Kidney (tissue), 22 donors: ENCODE measurements at regions of chr16 and their contacts with region 1.

Region 1: GRCh38 chr16:24810951-24811843 is 34.6 kb upstream of the SLC5A11 start:
- DNase-seq: peak in 1 of 5 donors; percentile 8
- H3K4me3 ChIP-seq: no peak overlapping the region
- H3K27ac ChIP-seq: no peak overlapping the region
- H3K4me1 ChIP-seq: peaks cover 0 to 5% (median 5%) of the 10 kb centered on the region in 3 donors
- H3K27me3 ChIP-seq: no peaks in the 10 kb centered on the region
- CTCF ChIP-seq: no peak

Region 2: DNA sequence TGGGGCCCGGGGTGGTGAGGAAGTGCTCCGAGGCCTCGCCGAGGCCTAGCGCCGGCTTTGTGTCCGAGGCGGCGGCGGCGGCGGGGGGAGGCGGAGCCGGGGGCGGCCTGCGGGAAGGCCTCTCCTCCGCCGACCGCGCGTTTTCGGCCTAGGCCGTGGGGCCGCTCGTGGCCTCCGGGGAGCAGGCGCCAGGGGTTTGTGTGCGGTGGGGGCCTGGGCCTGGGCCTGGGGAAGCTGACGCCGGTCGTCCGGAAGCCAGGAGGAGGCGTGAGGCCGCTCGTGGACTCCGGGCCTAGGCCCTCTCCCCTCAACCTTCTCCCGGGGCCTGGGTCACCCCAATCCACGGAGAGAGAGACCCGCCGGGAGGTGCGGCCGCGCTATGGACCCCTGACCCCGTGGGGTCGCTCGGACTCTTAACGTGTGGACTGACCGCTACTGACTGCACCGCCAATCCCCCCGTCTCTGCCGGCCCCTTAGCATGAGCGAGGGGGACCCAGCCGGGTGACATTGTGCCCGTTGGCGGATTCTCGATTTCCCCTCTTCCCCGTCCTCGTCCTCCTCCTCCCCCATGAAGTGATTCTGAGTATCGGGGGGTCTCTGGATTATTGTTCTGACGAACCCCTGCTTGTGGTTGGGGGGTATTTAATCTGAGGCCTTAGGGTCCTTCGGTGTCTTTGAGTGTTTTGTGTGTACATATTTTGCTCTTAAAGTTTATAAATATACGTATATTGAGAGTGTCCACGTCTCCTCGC is 271.2 kb before region 1 on chr16:
- intact Hi-C with region 1: loop called (anchors 10 kb)
- DNase-seq: peak in 4 of 5 donors; percentile 41 to 90 (median 73)
- H3K4me3 ChIP-seq: peak overlapping the region; percentile 86 to 96 (median 88)
- H3K27ac ChIP-seq: peak overlapping the region; percentile 94 to 100
- H3K4me1 ChIP-seq: peaks cover 0 to 12% (median 7%) of the 10 kb centered on the region in 3 donors
- H3K27me3 ChIP-seq: no peaks in the 10 kb centered on the region
- CTCF ChIP-seq: no peak

Region 3: GRCh38 chr16:24748242-24748641 is 63.0 kb before region 1 on chr16:
- intact Hi-C with region 1: no loop called
- DNase-seq: no peak
- H3K4me3 ChIP-seq: no peak overlapping the region
- H3K27ac ChIP-seq: no peak overlapping the region
- H3K4me1 ChIP-seq: peaks cover 0 to 27% (median 17%) of the 10 kb centered on the region in 3 donors
- H3K27me3 ChIP-seq: no peaks in the 10 kb centered on the region
- CTCF ChIP-seq: no peak